Calu3 (cell line): ENCODE measurements at regions of chrX and their contacts with region 1.

Region 1: GRCh38 chrX:153667956-153668396 is 5.6 kb downstream of the PNCK start:
- DNase-seq: peak; percentile 85
- H3K4me3 Mint-ChIP-seq: peak overlapping the region; percentile 51
- H3K27ac Mint-ChIP-seq: no peak overlapping the region
- H3K4me1 Mint-ChIP-seq: peaks cover 12% of the 10 kb centered on the region
- H3K27me3 Mint-ChIP-seq: peaks cover 64% of the 10 kb centered on the region
- CTCF ChIP-seq: peak; percentile 79

Region 2: DNA sequence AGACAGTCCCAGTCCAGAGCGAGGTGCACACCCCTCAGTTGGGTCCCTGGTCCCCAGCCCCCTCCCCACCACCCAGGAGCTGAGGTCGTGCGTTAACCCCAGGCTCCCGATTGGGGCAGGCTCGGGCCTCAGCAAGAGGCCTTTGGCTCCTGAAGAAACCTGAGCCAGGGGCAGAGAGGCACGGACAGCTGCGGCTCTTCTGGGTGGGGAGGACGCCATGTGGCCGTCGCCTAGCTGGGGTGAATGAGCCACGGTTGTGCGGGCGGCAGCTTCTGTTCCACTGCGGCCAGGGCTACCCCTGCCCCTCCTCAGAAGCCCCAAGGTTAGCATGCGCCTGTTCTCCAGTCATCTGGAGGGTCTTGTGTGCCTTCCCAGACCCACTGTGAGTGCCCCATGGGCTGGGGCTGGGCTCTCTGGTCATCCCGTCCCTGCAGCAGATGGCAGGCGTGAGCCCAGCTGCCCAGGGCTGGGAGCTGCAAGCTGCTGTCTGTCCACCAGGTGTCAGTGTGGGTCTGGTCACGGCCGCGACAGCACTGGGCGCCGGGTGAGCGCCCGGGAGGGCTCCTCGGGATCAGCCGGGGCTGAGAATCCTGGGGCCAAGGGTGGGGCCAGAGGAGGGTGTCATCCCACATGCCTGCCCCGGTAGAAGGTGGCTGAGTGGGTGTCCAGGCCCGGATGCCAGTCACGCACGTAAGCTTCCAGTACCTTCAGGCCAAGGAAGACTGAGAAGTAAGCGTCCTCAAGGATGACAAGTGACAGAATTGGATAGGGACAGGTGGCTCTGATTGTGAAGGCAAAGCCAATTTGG is 128.6 kb before region 1 on chrX:
- CTCF ChIA-PET with region 1: interaction called, 25 read pairs
- intact Hi-C with region 1: loop called (anchors 5 kb)
- DNase-seq: peak; percentile 86
- H3K4me3 Mint-ChIP-seq: no peak overlapping the region
- H3K27ac Mint-ChIP-seq: no peak overlapping the region
- H3K4me1 Mint-ChIP-seq: no peaks in the 10 kb centered on the region
- H3K27me3 Mint-ChIP-seq: peaks cover 64% of the 10 kb centered on the region
- CTCF ChIP-seq: peak; percentile 85